Transverse colon (tissue), 4 donors: ENCODE measurements at regions of chr13 and their contacts with region 1.

Region 1: DNA sequence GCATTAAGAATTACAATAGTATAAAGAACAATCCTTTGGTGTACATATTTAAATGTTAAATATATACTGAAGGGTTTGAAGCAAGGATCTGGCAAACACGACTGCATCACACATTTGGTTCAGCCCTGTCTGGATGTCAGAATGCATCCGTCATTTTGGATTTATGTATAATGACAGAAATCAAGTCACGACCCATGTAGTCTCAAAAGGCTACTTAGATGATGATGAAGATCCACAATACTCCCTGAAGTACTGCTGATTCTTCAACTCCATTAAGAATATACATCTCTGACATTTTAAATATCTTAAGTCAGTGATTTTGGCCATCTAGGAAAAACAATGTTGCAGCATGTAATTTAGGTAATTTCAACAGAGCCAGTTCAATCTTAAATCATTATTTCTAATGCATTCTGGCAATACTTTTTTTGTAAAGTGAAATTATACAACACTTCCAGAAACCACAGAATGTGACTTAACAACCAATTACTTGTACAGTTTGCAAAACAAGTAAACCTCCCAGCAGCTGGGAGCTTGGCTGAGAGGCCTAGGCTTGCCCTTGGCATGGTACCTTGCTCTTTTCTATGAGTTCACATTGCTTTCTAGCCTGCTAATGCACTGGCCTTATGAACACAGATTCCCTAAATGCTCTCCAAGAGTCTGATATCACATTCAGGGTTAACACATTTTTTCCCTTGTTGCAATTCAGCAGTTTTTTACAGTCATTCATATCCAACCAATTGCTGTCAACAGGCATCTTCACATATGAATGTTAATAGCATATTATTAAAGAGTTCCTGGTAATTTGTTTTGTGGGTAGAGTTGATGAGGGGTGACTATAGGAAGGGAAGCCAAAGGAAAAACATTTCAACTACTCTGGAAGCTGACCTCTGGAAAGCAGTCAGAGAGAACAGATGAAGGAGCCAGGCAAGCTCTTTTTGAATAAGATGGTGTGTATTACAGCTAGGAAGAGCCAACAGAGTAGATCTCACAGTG is 175.2 kb downstream of the ENOX1 start:
- DNase-seq: no peak
- H3K4me3 ChIP-seq: no peak overlapping the region
- H3K27ac ChIP-seq: no peak overlapping the region
- H3K4me1 ChIP-seq: peaks cover 0 to 5% (median 0%) of the 10 kb centered on the region in 4 donors
- H3K27me3 ChIP-seq: no peaks in the 10 kb centered on the region
- CTCF ChIP-seq: no peak
- EP300 ChIP-seq: no peak
- POLR2A ChIP-seq: no peak

Region 2: GRCh38 chr13:43626994-43627393 is 15.4 kb after region 1 on chr13:
- in situ Hi-C with region 1: no loop called
- intact Hi-C with region 1: loop called (anchors 1 kb)
- DNase-seq: no peak
- H3K4me3 ChIP-seq: no peak overlapping the region
- H3K27ac ChIP-seq: no peak overlapping the region
- H3K4me1 ChIP-seq: no peaks in the 10 kb centered on the region
- H3K27me3 ChIP-seq: no peaks in the 10 kb centered on the region
- CTCF ChIP-seq: no peak
- EP300 ChIP-seq: no peak
- POLR2A ChIP-seq: no peak